ENCODE measurements at regions of chr20 and their contacts with region 1.

Region 1: GRCh38 chr20:42444799-42445198 is 744.9 kb downstream of the PTPRT start:
- DNase-seq: no peak

Region 2: GRCh38 chr20:42406826-42407225 is 38.0 kb before region 1 on chr20:
- intact Hi-C with region 1: no loop called
- DNase-seq: no peak

Region 3: GRCh38 chr20:42507874-42508273 is 63.1 kb after region 1 on chr20:
- intact Hi-C with region 1: no loop called
- DNase-seq: no peak

Region 4: DNA sequence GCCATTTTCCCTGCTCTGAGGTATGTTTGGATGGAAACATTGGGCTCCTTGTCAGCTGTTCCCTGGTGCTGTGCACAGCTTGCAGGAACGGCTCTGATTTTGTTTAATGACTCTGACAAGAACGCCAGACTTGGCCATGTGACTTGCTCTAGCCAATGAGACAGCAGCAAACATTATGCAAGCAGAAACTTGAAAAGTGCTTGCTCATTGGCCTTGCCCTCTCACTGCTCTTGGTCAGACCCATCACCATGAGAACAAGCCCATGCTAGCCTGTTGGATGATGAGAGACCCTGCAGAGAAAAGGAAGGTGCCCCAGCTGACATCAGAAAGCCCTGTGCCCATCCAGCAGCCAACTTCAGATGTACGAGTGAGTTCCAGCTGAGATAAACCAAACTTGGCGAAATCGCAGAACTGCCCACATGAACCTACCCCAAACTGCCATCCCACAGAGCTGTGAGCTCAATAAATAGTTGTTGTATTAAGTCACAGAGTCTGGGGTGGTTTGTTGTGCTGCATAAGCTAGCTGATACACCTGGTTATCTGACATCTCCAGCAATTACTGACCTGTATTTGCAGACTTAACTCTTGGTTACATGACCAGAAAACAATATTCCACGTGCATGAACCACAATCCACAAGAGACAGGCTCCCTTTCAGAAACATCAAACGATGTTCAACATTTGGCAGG is 1645.3 kb after region 1 on chr20:
- intact Hi-C with region 1: loop called in 1 of 2 experiments (anchors 5 kb)
- DNase-seq: no peak